ENCODE measurements at regions of chr4 and their contacts with region 1.

Region 1: GRCh38 chr4:16001484-16001858 is 38.5 kb upstream of the FGFBP2 start:
- DNase-seq: peak; percentile 27
- H3K4me3 Mint-ChIP-seq: no peak overlapping the region
- H3K27ac Mint-ChIP-seq: no peak overlapping the region
- H3K4me1 Mint-ChIP-seq: no peaks in the 10 kb centered on the region
- H3K27me3 Mint-ChIP-seq: peaks cover 11% of the 10 kb centered on the region

Region 2: GRCh38 chr4:15805583-15806517 is 195.6 kb before region 1 on chr4:
- intact Hi-C with region 1: loop called (anchors 1 kb)
- DNase-seq: no peak
- H3K4me3 Mint-ChIP-seq: no peak overlapping the region
- H3K27ac Mint-ChIP-seq: no peak overlapping the region
- H3K4me1 Mint-ChIP-seq: peaks cover 74% of the 10 kb centered on the region
- H3K27me3 Mint-ChIP-seq: no peaks in the 10 kb centered on the region

Region 3: DNA sequence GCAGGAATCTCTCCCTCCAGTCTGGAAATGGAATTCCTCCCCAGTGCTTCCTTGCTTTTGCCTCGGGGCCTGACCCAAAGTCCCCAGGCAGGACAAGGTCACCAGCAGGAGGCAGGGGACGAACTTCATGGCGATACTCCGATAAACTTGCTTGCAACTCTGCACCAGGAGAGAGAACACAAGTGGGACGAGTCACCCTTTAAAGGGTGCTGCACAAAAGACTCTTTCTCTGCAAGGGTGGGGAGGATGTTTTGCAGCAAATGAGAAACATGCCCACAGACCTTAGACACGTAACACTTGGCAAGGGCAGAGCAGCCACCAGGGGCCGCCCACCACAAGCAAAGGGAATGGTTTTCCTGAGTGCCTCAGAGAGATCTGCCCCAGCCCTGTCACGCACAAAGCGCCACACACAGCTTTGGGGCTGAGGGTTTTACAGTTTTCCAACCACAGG is 38.4 kb before region 1 on chr4 and contains the start of gene FGFBP2:
- intact Hi-C with region 1: loop called (anchors 1 kb)
- DNase-seq: peak; percentile 40
- H3K4me3 Mint-ChIP-seq: peak within 1 kb of the TSS; percentile 64
- H3K27ac Mint-ChIP-seq: peak within 1 kb of the TSS; percentile 64
- H3K4me1 Mint-ChIP-seq: peaks cover 29% of the 10 kb centered on the region
- H3K27me3 Mint-ChIP-seq: peaks cover 19% of the 10 kb centered on the region
- total RNA-seq, gene FGFBP2: 4.8 and 7.7 TPM in 2 replicates